ENCODE measurements at regions of chr13 and their contacts with region 1.

Region 1: GRCh38 chr13:72727417-72728289 is at the starts of genes BORA and MZT1:
- DNase-seq: peak; percentile 88 to 98 (median 94)
- ATAC-seq: peak; percentile 92
- H3K4me3 ChIP-seq: peak within 1 kb of the TSS; percentile 87 to 91
- H3K4me3 Mint-ChIP-seq: peak within 1 kb of the TSS; percentile 95
- H3K27ac ChIP-seq: peak within 1 kb of the TSS; percentile 66 to 70
- H3K27ac Mint-ChIP-seq: peak within 1 kb of the TSS; percentile 84
- H3K4me1 ChIP-seq: peaks cover 25% of the 10 kb centered on the region
- H3K4me1 Mint-ChIP-seq: peaks cover 62% of the 10 kb centered on the region
- H3K27me3 ChIP-seq: no peaks in the 10 kb centered on the region
- H3K27me3 Mint-ChIP-seq: no peaks in the 10 kb centered on the region
- CTCF ChIP-seq: no peak
- total RNA-seq, gene BORA: 3.3 to 3.7 TPM
- total RNA-seq, gene MZT1: 10.0 to 10.4 TPM

Region 2: GRCh38 chr13:71285700-71286099 is 1442.0 kb before region 1 on chr13:
- CTCF ChIA-PET with region 1: no interaction called
- POLR2A ChIA-PET with region 1: no interaction called
- intact Hi-C with region 1: loop called in 1 of 2 experiments (anchors 10 kb)
- DNase-seq: peak in 2 of 9 experiments; percentile 26 to 31
- ATAC-seq: no peak
- H3K4me3 ChIP-seq: no peak overlapping the region
- H3K4me3 Mint-ChIP-seq: no peak overlapping the region
- H3K27ac ChIP-seq: no peak overlapping the region
- H3K27ac Mint-ChIP-seq: no peak overlapping the region
- H3K4me1 ChIP-seq: peaks cover 5% of the 10 kb centered on the region
- H3K4me1 Mint-ChIP-seq: peaks cover 8% of the 10 kb centered on the region
- H3K27me3 ChIP-seq: no peaks in the 10 kb centered on the region
- H3K27me3 Mint-ChIP-seq: no peaks in the 10 kb centered on the region
- CTCF ChIP-seq: no peak

Region 3: GRCh38 chr13:72643311-72643989 is 84.2 kb before region 1 on chr13:
- CTCF ChIA-PET with region 1: no interaction called
- POLR2A ChIA-PET with region 1: no interaction called
- intact Hi-C with region 1: no loop called
- DNase-seq: peak in 7 of 9 experiments; percentile 13 to 55 (median 40)
- ATAC-seq: no peak
- H3K4me3 ChIP-seq: no peak overlapping the region
- H3K4me3 Mint-ChIP-seq: no peak overlapping the region
- H3K27ac ChIP-seq: no peak overlapping the region
- H3K27ac Mint-ChIP-seq: no peak overlapping the region
- H3K4me1 ChIP-seq: no peaks in the 10 kb centered on the region
- H3K4me1 Mint-ChIP-seq: no peaks in the 10 kb centered on the region
- H3K27me3 ChIP-seq: no peaks in the 10 kb centered on the region
- H3K27me3 Mint-ChIP-seq: peaks cover 5% of the 10 kb centered on the region
- CTCF ChIP-seq: peak; percentile 64

Region 4: DNA sequence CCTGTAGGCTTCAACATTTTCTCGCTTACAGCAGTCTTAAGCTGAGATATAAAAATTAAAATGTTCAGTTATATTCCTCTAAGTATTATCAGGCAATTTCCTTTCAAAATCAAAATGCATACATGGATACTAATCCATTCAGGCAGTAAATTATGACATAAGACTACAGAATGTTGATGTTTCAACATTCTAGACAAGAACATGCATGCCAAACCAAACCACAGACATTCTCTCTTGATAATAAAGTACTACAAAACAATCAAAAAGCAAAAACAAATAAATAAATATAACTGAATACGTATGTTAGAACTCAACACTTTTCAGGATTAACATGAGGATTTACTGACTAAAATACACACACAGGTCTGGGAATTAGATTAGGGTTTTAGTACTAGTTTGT is 46.4 kb after region 1 on chr13:
- CTCF ChIA-PET with region 1: no interaction called
- POLR2A ChIA-PET with region 1: interaction called, 3 read pairs
- intact Hi-C with region 1: loop called in 1 of 2 experiments (anchors 5 kb)
- DNase-seq: no peak
- ATAC-seq: no peak
- H3K4me3 ChIP-seq: no peak overlapping the region
- H3K4me3 Mint-ChIP-seq: no peak overlapping the region
- H3K27ac ChIP-seq: no peak overlapping the region
- H3K27ac Mint-ChIP-seq: no peak overlapping the region
- H3K4me1 ChIP-seq: peaks cover under 1% of the 10 kb centered on the region
- H3K4me1 Mint-ChIP-seq: peaks cover 21% of the 10 kb centered on the region
- H3K27me3 ChIP-seq: no peaks in the 10 kb centered on the region
- H3K27me3 Mint-ChIP-seq: no peaks in the 10 kb centered on the region
- CTCF ChIP-seq: no peak

Region 5: GRCh38 chr13:72781451-72782439 is 54.1 kb after region 1 on chr13 and contains the starts of genes DIS3 and PIBF1:
- CTCF ChIA-PET with region 1: no interaction called
- POLR2A ChIA-PET with region 1: interaction called, 3 read pairs
- intact Hi-C with region 1: loop called (anchors 1 kb)
- DNase-seq: peak; percentile 88 to 98 (median 93)
- ATAC-seq: peak; percentile 96
- H3K4me3 ChIP-seq: peak within 1 kb of the TSS; percentile 83 to 96
- H3K4me3 Mint-ChIP-seq: peak within 1 kb of the TSS; percentile 97
- H3K27ac ChIP-seq: peak within 1 kb of the TSS; percentile 88 to 91
- H3K27ac Mint-ChIP-seq: peak within 1 kb of the TSS; percentile 97
- H3K4me1 ChIP-seq: peaks cover 48% of the 10 kb centered on the region
- H3K4me1 Mint-ChIP-seq: peaks cover 70% of the 10 kb centered on the region
- H3K27me3 ChIP-seq: no peaks in the 10 kb centered on the region
- H3K27me3 Mint-ChIP-seq: no peaks in the 10 kb centered on the region
- CTCF ChIP-seq: no peak
- total RNA-seq, gene DIS3: 60.8 to 64.5 TPM
- total RNA-seq, gene PIBF1: 13.1 to 14.3 TPM

Region 6: DNA sequence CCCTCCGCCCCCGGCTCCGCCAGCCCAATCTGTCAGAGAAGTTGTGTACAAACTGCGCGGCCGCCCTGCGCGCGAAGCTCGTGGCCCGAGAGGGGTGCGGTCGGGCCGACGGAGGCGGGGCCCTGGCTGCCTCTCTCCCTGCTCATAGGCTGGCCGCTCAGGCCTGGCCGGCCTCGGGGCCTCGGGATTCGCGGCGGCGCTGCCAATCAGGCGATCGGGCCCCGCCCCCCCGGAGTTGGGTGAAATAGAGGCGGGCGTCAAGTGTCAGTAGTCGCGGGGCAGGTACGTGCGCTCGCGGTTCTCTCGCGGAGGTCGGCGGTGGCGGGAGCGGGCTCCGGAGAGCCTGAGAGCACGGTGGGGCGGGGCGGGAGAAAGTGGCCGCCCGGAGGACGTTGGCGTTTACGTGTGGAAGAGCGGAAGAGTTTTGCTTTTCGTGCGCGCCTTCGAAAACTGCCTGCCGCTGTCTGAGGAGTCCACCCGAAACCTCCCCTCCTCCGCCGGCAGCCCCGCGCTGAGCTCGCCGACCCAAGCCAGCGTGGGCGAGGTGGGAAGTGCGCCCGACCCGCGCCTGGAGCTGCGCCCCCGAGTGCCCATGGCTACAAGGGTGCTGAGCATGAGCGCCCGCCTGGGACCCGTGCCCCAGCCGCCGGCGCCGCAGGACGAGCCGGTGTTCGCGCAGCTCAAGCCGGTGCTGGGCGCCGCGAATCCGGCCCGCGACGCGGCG is 331.2 kb after region 1 on chr13 and contains the start of gene KLF5:
- CTCF ChIA-PET with region 1: no interaction called
- POLR2A ChIA-PET with region 1: no interaction called
- intact Hi-C with region 1: loop called (anchors 2 to 5 kb)
- DNase-seq: peak; percentile 85 to 96 (median 93)
- ATAC-seq: peak; percentile 95
- H3K4me3 ChIP-seq: peak within 1 kb of the TSS; percentile 53 to 54
- H3K4me3 Mint-ChIP-seq: peak within 1 kb of the TSS; percentile 93
- H3K27ac ChIP-seq: no peak within 1 kb of the TSS
- H3K27ac Mint-ChIP-seq: peak within 1 kb of the TSS; percentile 72
- H3K4me1 ChIP-seq: peaks cover 14% of the 10 kb centered on the region
- H3K4me1 Mint-ChIP-seq: peaks cover 21% of the 10 kb centered on the region
- H3K27me3 ChIP-seq: peaks cover 11 to 12% of the 10 kb centered on the region in 2 experiments
- H3K27me3 Mint-ChIP-seq: peaks cover 40% of the 10 kb centered on the region
- CTCF ChIP-seq: no peak
- total RNA-seq, gene KLF5: 3.4 to 3.7 TPM

Region 7: DNA sequence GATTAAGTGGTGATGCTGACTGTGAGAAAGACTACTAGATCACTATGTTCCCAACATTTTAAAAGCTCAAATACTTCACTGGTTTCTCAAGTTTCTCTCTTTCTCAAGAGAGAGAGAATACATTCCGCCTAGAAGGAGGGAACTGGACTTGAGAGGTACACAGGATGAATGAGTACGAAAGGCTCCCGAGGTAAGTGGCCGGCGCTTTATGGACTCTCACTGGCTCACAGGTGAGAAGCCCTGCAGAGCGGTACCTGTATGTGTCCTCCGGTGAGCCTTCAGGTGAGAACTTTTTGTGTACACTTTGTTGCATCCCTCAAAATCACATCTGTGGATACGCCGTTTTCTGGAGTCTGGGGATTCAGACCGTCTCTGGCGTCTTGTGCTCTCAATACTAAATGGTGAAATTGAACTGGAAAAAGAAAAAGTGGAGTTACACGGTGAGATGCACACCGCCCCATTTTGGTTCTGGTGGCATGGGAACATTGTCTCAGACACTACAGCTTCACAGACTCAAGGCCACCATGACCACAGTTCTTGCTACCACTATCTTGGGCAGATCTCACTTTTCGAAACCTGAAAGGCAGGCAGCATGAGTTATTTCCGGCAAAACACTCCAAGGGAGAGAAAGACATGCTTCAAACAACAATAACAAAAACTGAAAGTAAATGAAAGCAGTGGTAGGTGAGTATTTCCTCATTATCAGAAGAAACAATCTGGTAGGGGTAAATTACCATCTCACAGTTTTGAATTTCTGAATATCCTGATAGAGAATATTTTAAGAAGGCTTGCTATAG is 987.7 kb after region 1 on chr13:
- CTCF ChIA-PET with region 1: no interaction called
- POLR2A ChIA-PET with region 1: no interaction called
- intact Hi-C with region 1: loop called in 1 of 2 experiments (anchors 10 kb)
- DNase-seq: peak in 8 of 9 experiments; percentile 35 to 94 (median 58)
- ATAC-seq: peak; percentile 84
- H3K4me3 ChIP-seq: peak overlapping the region in 1 of 2 experiments; percentile 15
- H3K4me3 Mint-ChIP-seq: peak overlapping the region; percentile 67
- H3K27ac ChIP-seq: peak overlapping the region; percentile 22 to 84
- H3K27ac Mint-ChIP-seq: peak overlapping the region; percentile 94
- H3K4me1 ChIP-seq: peaks cover 37% of the 10 kb centered on the region
- H3K4me1 Mint-ChIP-seq: peaks cover 46% of the 10 kb centered on the region
- H3K27me3 ChIP-seq: no peaks in the 10 kb centered on the region
- H3K27me3 Mint-ChIP-seq: no peaks in the 10 kb centered on the region
- CTCF ChIP-seq: no peak

Region 8: DNA sequence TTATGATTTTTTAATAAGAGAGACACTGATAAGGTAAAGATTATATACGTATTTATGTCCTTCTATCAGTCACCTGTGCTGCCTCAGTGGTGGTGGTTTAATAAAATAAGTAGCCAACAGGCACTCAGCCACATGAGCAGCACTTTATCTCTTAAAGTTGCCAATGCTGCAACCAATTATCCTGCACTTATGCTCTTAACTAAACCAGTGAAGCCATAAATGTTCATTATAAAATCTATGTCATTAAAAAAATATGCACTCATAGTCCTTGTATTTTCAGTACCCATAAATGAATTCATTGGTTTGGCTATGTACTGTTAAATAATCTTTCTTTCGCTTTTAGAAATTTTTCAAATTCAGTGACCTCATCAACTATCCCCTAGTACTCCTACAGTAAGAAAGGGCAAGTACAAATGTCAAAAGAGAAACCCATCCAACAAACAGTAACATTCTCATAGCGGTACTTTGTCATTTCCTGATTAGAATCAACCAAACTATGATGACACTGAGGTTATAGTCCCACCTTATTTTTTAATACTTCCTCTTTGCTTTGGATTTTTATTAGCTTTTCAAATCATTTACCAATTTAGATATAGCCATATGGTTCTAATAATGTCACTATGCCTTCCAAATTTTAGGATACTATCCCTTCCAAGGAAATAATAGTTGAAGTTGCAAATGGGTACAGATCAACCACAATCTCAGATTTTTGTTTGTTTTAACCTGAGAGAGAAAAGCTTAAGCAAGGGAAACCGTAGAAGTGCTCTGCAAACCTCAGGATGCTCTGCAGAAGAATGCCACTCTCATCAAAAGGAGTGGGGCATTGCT is 1215.7 kb after region 1 on chr13:
- CTCF ChIA-PET with region 1: no interaction called
- POLR2A ChIA-PET with region 1: no interaction called
- intact Hi-C with region 1: loop called in 1 of 2 experiments (anchors 5 kb)
- DNase-seq: peak in 2 of 9 experiments; percentile 57 to 78
- ATAC-seq: peak; percentile 93
- H3K4me3 ChIP-seq: no peak overlapping the region
- H3K4me3 Mint-ChIP-seq: peak overlapping the region; percentile 16
- H3K27ac ChIP-seq: peak overlapping the region; percentile 37 to 75
- H3K27ac Mint-ChIP-seq: peak overlapping the region; percentile 93
- H3K4me1 ChIP-seq: peaks cover 53% of the 10 kb centered on the region
- H3K4me1 Mint-ChIP-seq: peaks cover 80% of the 10 kb centered on the region
- H3K27me3 ChIP-seq: no peaks in the 10 kb centered on the region
- H3K27me3 Mint-ChIP-seq: no peaks in the 10 kb centered on the region
- CTCF ChIP-seq: no peak